Activated CD8-positive, alpha-beta T cell treated with anti-CD3 and anti-CD28 coated beads for 36 hours (primary cell): ENCODE measurements at regions of chr22 and their contacts with region 1.

Region 1: DNA sequence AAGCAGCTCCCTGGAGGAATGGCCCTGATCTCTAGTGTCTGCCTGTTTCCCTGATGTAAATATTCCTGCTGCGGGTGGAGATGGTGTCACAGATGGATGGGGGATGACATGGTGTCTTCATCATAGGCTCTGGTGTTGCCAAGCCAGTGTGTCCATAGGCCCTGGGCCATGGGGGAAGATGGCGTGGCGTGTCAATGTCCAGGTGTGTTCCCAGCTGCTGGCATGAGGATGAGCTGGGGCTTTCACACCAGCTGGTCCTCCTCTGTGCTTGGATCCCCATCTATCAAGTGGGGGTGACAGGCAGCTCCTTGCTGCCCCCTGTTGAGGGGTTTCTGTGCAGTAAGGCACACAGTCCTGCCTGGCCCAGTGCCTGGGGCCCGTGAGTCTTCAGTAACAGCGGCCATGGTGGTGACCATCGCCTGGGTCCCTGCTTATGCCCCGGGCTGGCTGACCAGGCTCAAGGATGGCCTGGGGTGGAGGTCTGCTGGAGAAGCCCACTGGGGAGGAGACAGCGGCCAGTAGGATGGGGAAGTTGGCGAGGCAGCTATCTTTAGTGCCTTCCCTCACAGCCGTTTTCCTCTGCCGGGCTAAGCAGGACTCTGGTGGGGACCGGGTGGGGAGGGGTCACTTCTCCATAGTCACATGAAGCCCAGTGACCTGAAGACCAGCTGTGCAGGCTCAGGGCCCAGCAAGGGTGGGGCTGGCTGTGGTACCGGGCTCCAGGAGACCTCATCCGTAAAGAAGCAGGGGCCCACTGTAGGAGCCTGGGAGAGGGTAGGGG is 12.7 kb downstream of the RPL3 start:
- DNase-seq: peak; percentile 77
- ATAC-seq: peak; percentile 34
- H3K4me3 Mint-ChIP-seq: no peak overlapping the region
- H3K27ac Mint-ChIP-seq: no peak overlapping the region
- H3K4me1 Mint-ChIP-seq: peaks cover 9% of the 10 kb centered on the region
- H3K27me3 Mint-ChIP-seq: no peaks in the 10 kb centered on the region
- CTCF ChIP-seq: peak; percentile 61

Region 2: DNA sequence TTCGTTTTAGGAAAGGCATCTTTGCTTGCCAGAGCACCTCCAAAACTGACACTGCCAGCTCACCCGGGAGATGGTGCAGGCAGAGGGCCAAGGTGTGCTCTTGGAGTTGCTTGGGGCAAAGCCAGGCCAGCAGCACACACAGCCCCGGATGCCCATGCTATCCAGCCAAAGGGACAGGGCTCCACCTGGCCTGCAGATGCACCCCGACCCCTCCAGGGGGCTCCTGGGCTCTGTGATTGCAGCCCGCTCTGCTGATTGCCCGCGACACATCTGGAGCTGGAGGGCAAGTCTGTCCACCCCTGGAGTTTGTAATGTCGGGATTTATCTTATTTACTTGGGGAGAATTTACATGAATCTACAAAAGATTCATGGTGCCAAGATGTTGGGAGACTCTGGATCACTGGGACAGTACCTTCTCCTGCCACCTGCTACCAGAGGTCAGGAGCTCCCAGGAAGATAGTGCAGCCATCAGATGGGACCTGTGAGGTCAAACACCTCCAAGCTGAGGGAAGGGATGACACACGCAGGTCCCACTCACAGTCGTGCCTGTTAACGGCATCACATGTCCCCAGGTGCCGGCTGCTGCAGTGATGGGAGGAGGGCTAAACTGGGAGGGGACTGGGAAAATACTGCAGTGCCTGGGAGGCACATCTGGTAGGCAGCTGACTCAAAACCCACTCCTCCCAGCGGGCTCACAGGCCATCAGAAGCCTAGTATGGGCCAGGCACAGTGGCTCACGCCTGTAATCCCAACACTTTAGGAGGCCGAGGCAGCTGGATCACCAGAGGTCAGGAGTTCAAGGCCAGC is 171.5 kb before region 1 on chr22:
- CTCF ChIA-PET with region 1: interaction called, 16 read pairs
- POLR2A ChIA-PET with region 1: no interaction called
- intact Hi-C with region 1: no loop called
- DNase-seq: peak; percentile 62
- ATAC-seq: peak; percentile 90
- H3K4me3 Mint-ChIP-seq: no peak overlapping the region
- H3K27ac Mint-ChIP-seq: no peak overlapping the region
- H3K4me1 Mint-ChIP-seq: peaks cover 4% of the 10 kb centered on the region
- H3K27me3 Mint-ChIP-seq: no peaks in the 10 kb centered on the region
- CTCF ChIP-seq: peak; percentile 55

Region 3: GRCh38 chr22:39215426-39216120 is 91.2 kb before region 1 on chr22:
- CTCF ChIA-PET with region 1: interaction called, 17 read pairs
- POLR2A ChIA-PET with region 1: interaction called, 4 read pairs
- intact Hi-C with region 1: no loop called
- DNase-seq: peak; percentile 58
- ATAC-seq: peak; percentile 93
- H3K4me3 Mint-ChIP-seq: no peak overlapping the region
- H3K27ac Mint-ChIP-seq: no peak overlapping the region
- H3K4me1 Mint-ChIP-seq: peaks cover 6% of the 10 kb centered on the region
- H3K27me3 Mint-ChIP-seq: peaks cover 20% of the 10 kb centered on the region
- CTCF ChIP-seq: peak; percentile 47